CD4-positive, alpha-beta T cell (primary cell): ENCODE measurements at regions of chr3 and their contacts with region 1.

Region 1: GRCh38 chr3:42581709-42582473 is at the start of gene SEC22C:
- DNase-seq: peak; percentile 90 to 97 (median 94)
- ATAC-seq: peak; percentile 89
- H3K4me3 ChIP-seq: peak within 1 kb of the TSS; percentile 76
- H3K4me3 Mint-ChIP-seq: peak within 1 kb of the TSS; percentile 93
- H3K27ac ChIP-seq: peak within 1 kb of the TSS; percentile 92 to 98
- H3K27ac Mint-ChIP-seq: peak within 1 kb of the TSS; percentile 98
- H3K4me1 ChIP-seq: peaks cover 17% of the 10 kb centered on the region
- H3K4me1 Mint-ChIP-seq: peaks cover 48% of the 10 kb centered on the region
- H3K27me3 ChIP-seq: no peaks in the 10 kb centered on the region
- H3K27me3 Mint-ChIP-seq: no peaks in the 10 kb centered on the region
- CTCF ChIP-seq: peak; percentile 44
- total RNA-seq, gene SEC22C: 73.6 to 75.4 TPM

Region 2: GRCh38 chr3:42518800-42519567 is 62.9 kb before region 1 on chr3:
- CTCF ChIA-PET with region 1: no interaction called
- POLR2A ChIA-PET with region 1: no interaction called
- intact Hi-C with region 1: no loop called
- DNase-seq: peak in 12 of 14 experiments; percentile 14 to 75 (median 37)
- ATAC-seq: peak; percentile 67
- H3K4me3 ChIP-seq: peak overlapping the region; percentile 15
- H3K4me3 Mint-ChIP-seq: no peak overlapping the region
- H3K27ac ChIP-seq: peak overlapping the region; percentile 22 to 39
- H3K27ac Mint-ChIP-seq: peak overlapping the region; percentile 81
- H3K4me1 ChIP-seq: peaks cover 38% of the 10 kb centered on the region
- H3K4me1 Mint-ChIP-seq: peaks cover 41% of the 10 kb centered on the region
- H3K27me3 ChIP-seq: no peaks in the 10 kb centered on the region
- H3K27me3 Mint-ChIP-seq: no peaks in the 10 kb centered on the region
- CTCF ChIP-seq: peak; percentile 37

Region 3: GRCh38 chr3:42562047-42562907 is 19.6 kb before region 1 on chr3:
- CTCF ChIA-PET with region 1: no interaction called
- POLR2A ChIA-PET with region 1: interaction called, 3 read pairs
- intact Hi-C with region 1: loop called (anchors 1 to 2 kb)
- DNase-seq: no peak
- ATAC-seq: no peak
- H3K4me3 ChIP-seq: no peak overlapping the region
- H3K4me3 Mint-ChIP-seq: no peak overlapping the region
- H3K27ac ChIP-seq: no peak overlapping the region
- H3K27ac Mint-ChIP-seq: no peak overlapping the region
- H3K4me1 ChIP-seq: peaks cover 3% of the 10 kb centered on the region
- H3K4me1 Mint-ChIP-seq: peaks cover 12% of the 10 kb centered on the region
- H3K27me3 ChIP-seq: no peaks in the 10 kb centered on the region
- H3K27me3 Mint-ChIP-seq: no peaks in the 10 kb centered on the region
- CTCF ChIP-seq: no peak

Region 4: DNA sequence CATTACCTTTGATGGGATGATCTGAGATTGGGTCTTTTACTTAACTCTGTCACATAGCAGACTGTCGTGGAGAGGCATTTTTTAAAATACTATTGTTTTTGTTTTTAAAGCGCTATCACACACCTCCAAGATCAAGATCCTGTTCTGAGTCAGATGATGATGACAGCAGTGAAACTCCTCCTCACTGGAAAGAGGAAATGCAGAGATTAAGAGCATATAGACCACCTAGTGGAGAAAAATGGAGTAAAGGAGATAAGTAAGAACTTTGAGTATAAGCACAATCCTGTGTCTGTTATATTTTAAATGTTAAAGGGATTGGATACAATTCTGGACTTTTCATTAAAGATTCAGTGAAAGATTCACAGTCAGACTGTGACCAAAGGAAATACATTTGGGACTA is 53.2 kb after region 1 on chr3:
- CTCF ChIA-PET with region 1: interaction called, 7 read pairs
- POLR2A ChIA-PET with region 1: interaction called, 3 read pairs
- intact Hi-C with region 1: loop called in 1 of 2 experiments (anchors 10 kb)
- DNase-seq: peak in 3 of 14 experiments; percentile 36 to 59 (median 49)
- ATAC-seq: peak; percentile 55
- H3K4me3 ChIP-seq: no peak overlapping the region
- H3K4me3 Mint-ChIP-seq: no peak overlapping the region
- H3K27ac ChIP-seq: no peak overlapping the region
- H3K27ac Mint-ChIP-seq: peak overlapping the region; percentile 61
- H3K4me1 ChIP-seq: peaks cover 17% of the 10 kb centered on the region
- H3K4me1 Mint-ChIP-seq: peaks cover 4% of the 10 kb centered on the region
- H3K27me3 ChIP-seq: no peaks in the 10 kb centered on the region
- H3K27me3 Mint-ChIP-seq: no peaks in the 10 kb centered on the region
- CTCF ChIP-seq: no peak

Region 5: GRCh38 chr3:42749753-42750231 is 167.9 kb after region 1 on chr3:
- CTCF ChIA-PET with region 1: interaction called, 10 read pairs
- POLR2A ChIA-PET with region 1: no interaction called
- intact Hi-C with region 1: loop called in 1 of 2 experiments (anchors 5 kb)
- DNase-seq: peak in 4 of 14 experiments; percentile 10 to 41 (median 30)
- ATAC-seq: no peak
- H3K4me3 ChIP-seq: no peak overlapping the region
- H3K4me3 Mint-ChIP-seq: no peak overlapping the region
- H3K27ac ChIP-seq: no peak overlapping the region
- H3K27ac Mint-ChIP-seq: no peak overlapping the region
- H3K4me1 ChIP-seq: peaks cover 49% of the 10 kb centered on the region
- H3K4me1 Mint-ChIP-seq: peaks cover 44% of the 10 kb centered on the region
- H3K27me3 ChIP-seq: no peaks in the 10 kb centered on the region
- H3K27me3 Mint-ChIP-seq: no peaks in the 10 kb centered on the region
- CTCF ChIP-seq: peak; percentile 21